ENCODE measurements at regions of chr12 and their contacts with region 1.

Region 1: GRCh38 chr12:50504798-50505385 is at the start of gene DIP2B:
- DNase-seq: peak in 1 of 2 donors; percentile 93
- H3K4me3 ChIP-seq: peak within 1 kb of the TSS; percentile 88 to 90
- H3K27ac ChIP-seq: peak within 1 kb of the TSS; percentile 98
- H3K4me1 ChIP-seq: peaks cover 47% of the 10 kb centered on the region
- H3K27me3 ChIP-seq: no peaks in the 10 kb centered on the region
- CTCF ChIP-seq: peak; percentile 97 to 98 (median 97)
- POLR2A ChIP-seq: peak in 1 of 2 donors; percentile 41
- total RNA-seq, gene DIP2B: 32.2 TPM

Region 2: GRCh38 chr12:50637870-50638481 is 133.1 kb after region 1 on chr12:
- intact Hi-C with region 1: loop called (anchors 5 kb)
- DNase-seq: no peak
- H3K4me3 ChIP-seq: no peak overlapping the region
- H3K27ac ChIP-seq: peak overlapping the region; percentile 41
- H3K4me1 ChIP-seq: peaks cover 24% of the 10 kb centered on the region
- H3K27me3 ChIP-seq: no peaks in the 10 kb centered on the region
- CTCF ChIP-seq: peak; percentile 33 to 60 (median 37)
- POLR2A ChIP-seq: no peak